ENCODE measurements at regions of chr1 and their contacts with region 1.

Region 1: GRCh38 chr1:201385299-201385891 is 7.9 kb upstream of the TNNT2 start:
- DNase-seq: peak; percentile 72 to 90 (median 86)
- ATAC-seq: peak; percentile 98
- H3K4me3 ChIP-seq: no peak overlapping the region
- H3K27ac ChIP-seq: no peak overlapping the region
- H3K4me1 ChIP-seq: peaks cover 0 to 3% of the 10 kb centered on the region in 2 experiments; a peak in 1 of 5 replicates
- H3K27me3 ChIP-seq: peaks cover 26 to 77% of the 10 kb centered on the region in 2 experiments
- CTCF ChIP-seq: peak; percentile 84 to 95 (median 86)
- EP300 ChIP-seq: no peak
- POLR2A ChIP-seq: no peak
- RAD21 ChIP-seq: peak in 1 of 2 experiments; percentile 63; a peak in 2 of 4 replicates

Region 2: GRCh38 chr1:201408176-201408833 is 22.9 kb after region 1 on chr1:
- CTCF ChIA-PET with region 1: interaction called, 4 read pairs
- POLR2A ChIA-PET with region 1: interaction called, 4 read pairs
- in situ Hi-C with region 1: no loop called
- intact Hi-C with region 1: loop called (anchors 1 kb)
- DNase-seq: peak; percentile 86 to 92 (median 88)
- ATAC-seq: peak; percentile 97
- H3K4me3 ChIP-seq: no peak overlapping the region
- H3K27ac ChIP-seq: no peak overlapping the region
- H3K4me1 ChIP-seq: no peaks in the 10 kb centered on the region
- H3K27me3 ChIP-seq: peaks cover 33 to 69% of the 10 kb centered on the region in 2 experiments
- CTCF ChIP-seq: peak; percentile 88 to 98 (median 97)
- EP300 ChIP-seq: no peak
- POLR2A ChIP-seq: no peak
- RAD21 ChIP-seq: peak in 1 of 2 experiments; percentile 76; a peak in 2 of 4 replicates

Region 3: DNA sequence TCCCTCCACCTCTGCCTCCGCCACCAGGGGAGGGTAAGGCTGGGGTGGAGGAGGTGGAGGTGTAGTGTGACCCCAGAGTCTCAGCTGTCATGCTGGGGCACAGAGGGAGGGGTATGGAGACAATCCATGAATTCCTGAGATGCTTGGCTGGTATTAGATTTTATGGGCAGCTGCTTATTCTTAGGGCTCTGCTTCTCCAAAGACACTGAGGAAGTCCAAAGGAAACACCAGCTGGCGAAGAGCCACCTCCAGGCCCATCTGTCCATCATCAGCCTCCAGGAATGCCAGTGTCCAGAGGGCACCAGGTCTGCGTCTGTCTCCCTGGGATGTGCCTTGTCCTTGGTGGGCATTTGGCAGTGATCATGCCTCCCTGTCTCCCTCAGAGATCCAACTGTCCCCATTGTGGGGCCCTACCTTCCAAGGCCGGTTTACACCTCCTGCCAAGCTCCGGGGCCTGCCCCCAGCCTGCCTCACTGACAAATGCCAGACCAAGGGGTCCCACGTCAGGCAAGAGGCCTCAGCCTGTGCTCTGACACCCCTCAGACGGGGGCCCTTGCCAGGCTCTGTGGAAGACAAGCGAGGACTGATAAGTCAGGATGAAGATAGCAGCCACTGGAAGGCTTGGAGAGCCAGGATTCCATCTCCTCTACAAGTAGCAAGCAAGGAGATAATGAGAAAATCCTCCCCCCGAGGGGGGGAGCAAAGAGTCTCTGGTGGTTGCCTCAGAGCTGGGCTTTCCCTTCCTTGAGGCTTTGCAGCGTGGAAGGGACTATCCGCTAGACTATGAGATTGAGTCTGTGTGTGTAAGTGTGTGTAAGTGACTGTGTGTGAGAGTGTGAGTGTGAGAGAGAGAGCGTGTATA is 34.6 kb after region 1 on chr1:
- CTCF ChIA-PET with region 1: no interaction called
- POLR2A ChIA-PET with region 1: no interaction called
- in situ Hi-C with region 1: no loop called
- intact Hi-C with region 1: no loop called
- DNase-seq: no peak
- ATAC-seq: no peak
- H3K4me3 ChIP-seq: no peak overlapping the region
- H3K27ac ChIP-seq: no peak overlapping the region
- H3K4me1 ChIP-seq: no peaks in the 10 kb centered on the region
- H3K27me3 ChIP-seq: peaks cover 42 to 54% of the 10 kb centered on the region in 2 experiments; a peak in 4 of 5 replicates
- CTCF ChIP-seq: no peak
- EP300 ChIP-seq: no peak
- POLR2A ChIP-seq: no peak
- RAD21 ChIP-seq: no peak

Measured in K562 (cell line).